ENCODE measurements at regions of chrX and their contacts with region 1.

Region 1: DNA sequence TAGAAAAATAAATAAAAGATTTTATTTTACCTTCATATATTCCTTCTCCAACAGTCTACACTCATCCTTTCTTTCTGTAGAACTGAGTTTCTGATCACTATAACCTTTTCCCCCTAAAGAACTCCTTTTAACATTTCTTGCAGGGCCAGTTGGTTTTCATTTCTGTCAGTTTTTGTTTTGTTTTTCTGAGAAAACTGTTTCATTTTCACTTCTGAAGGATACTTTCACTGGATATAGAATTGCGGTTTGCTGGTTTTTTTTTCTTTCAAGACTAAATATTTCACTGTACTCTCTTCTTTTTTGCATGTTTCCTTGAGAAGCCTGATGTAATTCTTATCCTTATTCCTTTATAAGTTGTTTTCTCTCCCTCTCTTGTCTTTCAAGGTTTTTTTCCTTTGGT is 90.4 kb upstream of the EOLA2 start:
- DNase-seq: no peak
- H3K4me3 Mint-ChIP-seq: peak overlapping the region; percentile 46
- H3K27ac Mint-ChIP-seq: peak overlapping the region; percentile 67
- H3K4me1 Mint-ChIP-seq: peaks cover 11% of the 10 kb centered on the region
- H3K27me3 Mint-ChIP-seq: peaks cover 7% of the 10 kb centered on the region

Region 2: DNA sequence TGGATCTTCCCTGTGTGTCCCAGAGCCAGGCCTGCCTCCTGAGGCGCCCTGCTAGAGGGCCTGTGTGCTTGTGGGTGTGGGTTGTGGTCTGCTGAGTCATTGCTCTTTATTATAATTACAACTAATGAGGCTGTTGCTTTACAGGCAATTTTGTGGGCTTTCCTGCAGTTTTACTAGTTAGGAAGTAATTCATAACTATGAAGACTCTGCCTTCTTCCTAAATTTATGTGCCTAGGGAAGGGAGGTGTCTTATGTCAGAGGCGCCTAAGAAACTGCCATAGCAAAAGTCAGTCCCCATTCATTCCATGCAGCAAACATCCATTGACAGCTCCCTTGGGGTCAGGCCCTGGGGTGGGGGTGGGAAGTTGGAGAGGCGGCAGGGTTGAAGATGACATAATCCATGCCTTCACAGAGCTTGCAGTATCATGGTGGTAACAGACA is 882.8 kb before region 1 on chrX:
- intact Hi-C with region 1: no loop called
- DNase-seq: no peak
- H3K4me3 Mint-ChIP-seq: no peak overlapping the region
- H3K27ac Mint-ChIP-seq: no peak overlapping the region
- H3K4me1 Mint-ChIP-seq: no peaks in the 10 kb centered on the region
- H3K27me3 Mint-ChIP-seq: no peaks in the 10 kb centered on the region

Region 3: GRCh38 chrX:150119323-150119722 is 90.6 kb after region 1 on chrX:
- intact Hi-C with region 1: no loop called
- DNase-seq: no peak
- H3K4me3 Mint-ChIP-seq: no peak overlapping the region
- H3K27ac Mint-ChIP-seq: no peak overlapping the region
- H3K4me1 Mint-ChIP-seq: no peaks in the 10 kb centered on the region
- H3K27me3 Mint-ChIP-seq: peaks cover 3% of the 10 kb centered on the region

Region 4: GRCh38 chrX:150200820-150201287 is 172.2 kb after region 1 on chrX:
- intact Hi-C with region 1: loop called (anchors 2 kb)
- DNase-seq: peak; percentile 40
- H3K4me3 Mint-ChIP-seq: peak overlapping the region; percentile 26
- H3K27ac Mint-ChIP-seq: no peak overlapping the region
- H3K4me1 Mint-ChIP-seq: peaks cover 10% of the 10 kb centered on the region
- H3K27me3 Mint-ChIP-seq: peaks cover 2% of the 10 kb centered on the region

Region 5: GRCh38 chrX:150873616-150874015 is 844.9 kb after region 1 on chrX:
- intact Hi-C with region 1: loop called (anchors 10 kb)
- DNase-seq: no peak
- H3K4me3 Mint-ChIP-seq: no peak overlapping the region
- H3K27ac Mint-ChIP-seq: peak overlapping the region; percentile 34
- H3K4me1 Mint-ChIP-seq: peaks cover 29% of the 10 kb centered on the region
- H3K27me3 Mint-ChIP-seq: no peaks in the 10 kb centered on the region